SK-N-SH (cell line): ENCODE measurements at regions of chr17 and their contacts with region 1.

Region 1: GRCh38 chr17:46841561-46842379 is 9.6 kb upstream of the WNT9B start:
- DNase-seq: peak; percentile 96
- H3K4me3 ChIP-seq: peak overlapping the region; percentile 39 to 47
- H3K27ac ChIP-seq: no peak overlapping the region
- H3K4me1 ChIP-seq: peaks cover 0 to 3% of the 10 kb centered on the region in 2 experiments; a peak in 1 of 4 replicates
- H3K27me3 ChIP-seq: peaks cover 23% of the 10 kb centered on the region; the same call in 1 of the 2 replicates
- CTCF ChIP-seq: peak; percentile 79
- EP300 ChIP-seq: no peak
- RAD21 ChIP-seq: peak; percentile 72

Region 2: GRCh38 chr17:46811978-46812583 is 29.7 kb before region 1 on chr17:
- CTCF ChIA-PET with region 1: interaction called, 39 read pairs
- POLR2A ChIA-PET with region 1: no interaction called
- DNase-seq: no peak
- H3K4me3 ChIP-seq: no peak overlapping the region
- H3K27ac ChIP-seq: peak overlapping the region in 1 of 2 experiments; percentile 18; a peak in 1 of 4 replicates
- H3K4me1 ChIP-seq: peaks cover 0 to 48% of the 10 kb centered on the region in 2 experiments; a peak in 1 of 4 replicates
- H3K27me3 ChIP-seq: no peaks in the 10 kb centered on the region; the same call in 1 of the 2 replicates
- CTCF ChIP-seq: no peak
- EP300 ChIP-seq: peak in 1 of 2 experiments; percentile 54; a peak in 1 of 4 replicates
- RAD21 ChIP-seq: no peak

Region 3: DNA sequence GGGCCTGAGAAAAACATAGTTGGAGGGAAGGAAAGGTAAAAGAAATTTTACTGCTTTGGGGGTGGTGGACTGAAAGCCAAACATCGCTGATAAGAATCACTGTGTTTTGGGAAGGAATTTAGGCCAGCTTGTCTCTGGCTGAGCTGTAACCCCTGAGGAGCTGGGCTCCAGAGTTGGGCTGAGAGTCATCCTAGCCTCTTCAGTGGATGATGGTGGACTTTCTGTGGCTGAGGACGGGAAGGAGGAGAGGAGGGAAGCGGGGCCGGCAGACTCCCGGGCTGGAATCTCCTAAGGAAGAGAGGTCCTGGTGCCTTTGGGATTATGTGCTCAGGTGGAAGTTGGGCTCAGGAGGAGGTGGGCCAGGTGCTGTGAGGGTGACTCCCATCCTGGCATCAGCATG is 18.2 kb after region 1 on chr17:
- CTCF ChIA-PET with region 1: interaction called, 49 read pairs
- POLR2A ChIA-PET with region 1: no interaction called
- DNase-seq: no peak
- H3K4me3 ChIP-seq: no peak overlapping the region
- H3K27ac ChIP-seq: no peak overlapping the region
- H3K4me1 ChIP-seq: no peaks in the 10 kb centered on the region; a peak in 1 of 4 replicates
- H3K27me3 ChIP-seq: peaks cover 9% of the 10 kb centered on the region; the same call in 1 of the 2 replicates
- CTCF ChIP-seq: no peak
- EP300 ChIP-seq: no peak
- RAD21 ChIP-seq: no peak

Region 4: DNA sequence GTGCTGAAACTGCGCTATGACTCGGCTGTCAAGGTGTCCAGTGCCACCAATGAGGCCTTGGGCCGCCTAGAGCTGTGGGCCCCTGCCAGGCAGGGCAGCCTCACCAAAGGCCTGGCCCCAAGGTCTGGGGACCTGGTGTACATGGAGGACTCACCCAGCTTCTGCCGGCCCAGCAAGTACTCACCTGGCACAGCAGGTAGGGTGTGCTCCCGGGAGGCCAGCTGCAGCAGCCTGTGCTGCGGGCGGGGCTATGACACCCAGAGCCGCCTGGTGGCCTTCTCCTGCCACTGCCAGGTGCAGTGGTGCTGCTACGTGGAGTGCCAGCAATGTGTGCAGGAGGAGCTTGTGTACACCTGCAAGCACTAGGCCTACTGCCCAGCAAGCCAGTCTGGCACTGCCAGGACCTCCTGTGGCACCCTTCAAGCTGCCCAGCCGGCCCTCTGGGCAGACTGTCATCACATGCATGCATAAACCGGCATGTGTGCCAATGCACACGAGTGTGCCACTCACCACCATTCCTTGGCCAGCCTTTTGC is 34.6 kb after region 1 on chr17:
- CTCF ChIA-PET with region 1: interaction called, 44 read pairs
- POLR2A ChIA-PET with region 1: no interaction called
- DNase-seq: peak; percentile 48
- H3K4me3 ChIP-seq: no peak overlapping the region
- H3K27ac ChIP-seq: no peak overlapping the region
- H3K4me1 ChIP-seq: no peaks in the 10 kb centered on the region; a peak in 1 of 4 replicates
- H3K27me3 ChIP-seq: peaks cover 17% of the 10 kb centered on the region; the same call in 1 of the 2 replicates
- CTCF ChIP-seq: peak; percentile 37
- EP300 ChIP-seq: no peak
- RAD21 ChIP-seq: peak; percentile 20; the same call in 1 of the 2 replicates

Region 5: GRCh38 chr17:46894476-46895151 is 52.8 kb after region 1 on chr17:
- CTCF ChIA-PET with region 1: interaction called, 34 read pairs
- POLR2A ChIA-PET with region 1: no interaction called
- DNase-seq: no peak
- H3K4me3 ChIP-seq: no peak overlapping the region
- H3K27ac ChIP-seq: no peak overlapping the region
- H3K4me1 ChIP-seq: no peaks in the 10 kb centered on the region; a peak in 1 of 4 replicates
- H3K27me3 ChIP-seq: peaks cover 36% of the 10 kb centered on the region
- CTCF ChIP-seq: no peak
- EP300 ChIP-seq: no peak
- RAD21 ChIP-seq: no peak

Region 6: DNA sequence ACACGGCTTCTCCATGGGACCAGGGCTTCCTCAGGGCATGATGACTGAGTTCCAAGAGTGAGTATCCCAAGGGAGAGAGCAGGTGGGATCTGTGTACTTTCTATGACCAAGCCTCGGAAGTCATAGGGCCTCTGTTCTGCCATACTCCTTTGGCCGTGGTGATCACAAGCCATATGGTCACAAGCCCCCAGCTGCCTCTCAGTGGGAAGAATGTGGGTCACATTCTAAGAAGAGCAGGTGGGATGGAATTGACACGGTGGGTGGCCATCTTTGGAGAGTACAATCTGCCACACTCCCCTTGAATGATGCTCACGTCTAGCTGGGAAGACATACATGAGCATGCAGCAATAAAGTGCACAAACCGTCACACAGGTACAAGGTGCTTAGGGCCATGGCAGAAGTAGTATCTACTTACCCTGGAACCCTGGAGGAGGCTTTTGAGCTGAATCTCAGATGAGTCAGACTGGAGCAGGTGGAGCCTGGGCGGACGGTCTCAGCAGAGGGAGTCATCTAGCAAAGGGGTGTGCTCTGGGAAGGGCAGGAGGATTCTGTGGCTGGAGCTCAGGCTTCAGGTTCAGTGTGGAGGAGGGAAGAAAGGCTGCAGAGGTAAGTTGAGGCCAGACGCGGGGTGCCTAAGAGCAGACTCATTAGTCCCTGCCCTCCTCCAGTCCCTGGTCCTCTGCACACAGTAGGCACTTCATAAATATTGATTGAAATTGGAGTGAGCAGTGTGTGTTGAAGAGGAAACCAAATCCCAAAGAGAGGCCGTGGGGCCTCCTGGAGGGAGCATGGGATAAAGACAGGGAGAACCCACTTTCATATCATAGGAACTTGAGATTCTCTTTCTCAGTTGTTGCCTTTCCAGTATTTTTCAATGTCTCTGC is 107.8 kb after region 1 on chr17:
- CTCF ChIA-PET with region 1: interaction called, 210 read pairs
- POLR2A ChIA-PET with region 1: no interaction called
- DNase-seq: no peak
- H3K4me3 ChIP-seq: no peak overlapping the region
- H3K27ac ChIP-seq: no peak overlapping the region
- H3K4me1 ChIP-seq: peaks cover under 1 to 21% of the 10 kb centered on the region in 2 experiments; a peak in 2 of 4 replicates
- H3K27me3 ChIP-seq: no peaks in the 10 kb centered on the region
- CTCF ChIP-seq: no peak
- EP300 ChIP-seq: no peak
- RAD21 ChIP-seq: no peak

Region 7: DNA sequence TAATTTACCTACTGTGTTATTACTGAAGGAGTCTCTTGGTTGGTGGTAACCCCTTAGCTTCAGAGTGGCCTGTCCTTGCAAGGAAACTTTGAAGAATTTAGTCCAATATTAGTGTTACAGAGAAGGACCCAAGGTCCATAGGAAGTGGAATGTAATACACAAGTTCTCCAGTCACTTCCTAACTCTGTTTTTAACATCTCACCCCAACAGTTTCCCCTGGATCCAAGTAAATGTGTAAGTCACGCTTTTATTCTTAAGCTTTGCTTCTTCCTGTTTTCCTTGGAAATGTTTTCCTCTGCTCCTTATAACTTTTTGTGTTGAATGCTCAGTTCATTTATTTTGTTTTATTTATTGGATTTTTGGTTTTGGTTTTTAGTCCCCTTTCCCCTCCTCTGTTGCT is 163.1 kb after region 1 on chr17:
- CTCF ChIA-PET with region 1: interaction called, 22 read pairs
- POLR2A ChIA-PET with region 1: no interaction called
- DNase-seq: no peak
- H3K4me3 ChIP-seq: no peak overlapping the region
- H3K27ac ChIP-seq: no peak overlapping the region
- H3K4me1 ChIP-seq: no peaks in the 10 kb centered on the region; a peak in 1 of 4 replicates
- H3K27me3 ChIP-seq: no peaks in the 10 kb centered on the region
- CTCF ChIP-seq: no peak
- EP300 ChIP-seq: no peak
- RAD21 ChIP-seq: no peak

Region 8: DNA sequence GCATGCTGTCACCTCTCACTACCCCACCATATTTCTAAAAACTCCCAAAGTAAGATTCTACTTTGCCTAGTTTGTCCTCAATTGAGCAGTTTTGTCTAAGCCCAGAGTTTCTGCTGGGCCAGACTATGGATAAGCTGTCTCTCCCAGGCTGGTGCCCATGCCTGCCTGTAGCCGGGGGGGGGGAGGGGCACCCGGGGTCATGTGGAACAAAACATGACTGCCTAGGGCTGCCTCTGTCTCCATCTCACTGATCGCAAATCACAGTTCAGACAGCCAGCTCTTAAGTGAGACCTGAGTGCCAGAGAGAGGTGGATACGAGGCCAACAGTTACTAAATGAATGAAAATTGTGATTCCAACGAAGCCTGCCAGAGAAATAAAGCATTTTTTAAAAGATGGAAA is 216.1 kb after region 1 on chr17:
- CTCF ChIA-PET with region 1: no interaction called
- POLR2A ChIA-PET with region 1: no interaction called
- DNase-seq: peak; percentile 41
- H3K4me3 ChIP-seq: no peak overlapping the region
- H3K27ac ChIP-seq: no peak overlapping the region
- H3K4me1 ChIP-seq: no peaks in the 10 kb centered on the region; a peak in 1 of 4 replicates
- H3K27me3 ChIP-seq: no peaks in the 10 kb centered on the region
- CTCF ChIP-seq: no peak
- EP300 ChIP-seq: no peak
- RAD21 ChIP-seq: no peak

Region 9: GRCh38 chr17:47131761-47132160 is 290.0 kb after region 1 on chr17:
- CTCF ChIA-PET with region 1: no interaction called
- POLR2A ChIA-PET with region 1: no interaction called
- DNase-seq: no peak
- H3K4me3 ChIP-seq: no peak overlapping the region
- H3K27ac ChIP-seq: no peak overlapping the region
- H3K4me1 ChIP-seq: no peaks in the 10 kb centered on the region
- H3K27me3 ChIP-seq: no peaks in the 10 kb centered on the region
- CTCF ChIP-seq: no peak
- EP300 ChIP-seq: no peak
- RAD21 ChIP-seq: no peak